Caco-2 (cell line): ENCODE measurements at regions of chr2 and their contacts with region 1.

Region 1: GRCh38 chr2:26235085-26235484 is 9.3 kb downstream of the HADHA start:
- DNase-seq: peak in 1 of 2 experiments; percentile 22
- H3K4me3 ChIP-seq: no peak overlapping the region
- H3K4me3 Mint-ChIP-seq: no peak overlapping the region
- H3K27ac Mint-ChIP-seq: no peak overlapping the region
- H3K4me1 ChIP-seq: peaks cover 6% of the 10 kb centered on the region; the same call in 1 of the 2 replicates
- H3K4me1 Mint-ChIP-seq: peaks cover 8% of the 10 kb centered on the region
- H3K27me3 ChIP-seq: no peaks in the 10 kb centered on the region
- H3K27me3 Mint-ChIP-seq: no peaks in the 10 kb centered on the region
- CTCF ChIP-seq: peak; percentile 30 to 33

Region 2: DNA sequence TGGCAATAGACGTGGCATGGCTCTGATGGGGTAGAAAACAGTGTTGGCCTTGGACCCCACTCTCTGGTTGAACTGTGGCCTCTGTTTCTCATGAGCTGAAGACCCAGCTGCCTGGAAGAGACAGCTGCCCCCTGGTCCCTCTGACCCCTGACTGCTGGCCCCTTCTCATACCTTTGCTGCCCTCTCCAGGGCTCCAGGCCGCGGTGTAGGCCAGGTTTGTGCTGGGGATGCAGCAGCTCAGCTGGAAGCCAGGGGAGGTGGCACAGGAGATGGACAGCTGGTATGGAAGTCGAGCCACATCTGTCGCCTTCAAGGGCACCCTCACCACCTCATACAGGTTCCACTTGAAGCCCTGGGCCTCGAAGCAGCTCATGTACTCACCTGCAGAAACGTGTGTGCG is 79.2 kb after region 1 on chr2:
- CTCF ChIA-PET with region 1: no interaction called
- POLR2A ChIA-PET with region 1: no interaction called
- intact Hi-C with region 1: loop called (anchors 5 kb)
- DNase-seq: peak in 1 of 2 experiments; percentile 56
- H3K4me3 ChIP-seq: no peak overlapping the region
- H3K4me3 Mint-ChIP-seq: no peak overlapping the region
- H3K27ac Mint-ChIP-seq: no peak overlapping the region
- H3K4me1 ChIP-seq: no peaks in the 10 kb centered on the region
- H3K4me1 Mint-ChIP-seq: peaks cover under 1% of the 10 kb centered on the region
- H3K27me3 ChIP-seq: no peaks in the 10 kb centered on the region
- H3K27me3 Mint-ChIP-seq: peaks cover 3% of the 10 kb centered on the region
- CTCF ChIP-seq: peak; percentile 20 to 49

Region 3: GRCh38 chr2:26330113-26330549 is 95.0 kb after region 1 on chr2:
- CTCF ChIA-PET with region 1: interaction called, 4 read pairs
- POLR2A ChIA-PET with region 1: no interaction called
- intact Hi-C with region 1: loop called (anchors 1 kb)
- DNase-seq: peak; percentile 85 to 91
- H3K4me3 ChIP-seq: no peak overlapping the region
- H3K4me3 Mint-ChIP-seq: no peak overlapping the region
- H3K27ac Mint-ChIP-seq: no peak overlapping the region
- H3K4me1 ChIP-seq: no peaks in the 10 kb centered on the region
- H3K4me1 Mint-ChIP-seq: peaks cover 13% of the 10 kb centered on the region
- H3K27me3 ChIP-seq: no peaks in the 10 kb centered on the region
- H3K27me3 Mint-ChIP-seq: no peaks in the 10 kb centered on the region
- CTCF ChIP-seq: peak; percentile 84 to 95

Region 4: GRCh38 chr2:26422947-26423629 is 188.0 kb after region 1 on chr2:
- CTCF ChIA-PET with region 1: no interaction called
- POLR2A ChIA-PET with region 1: no interaction called
- intact Hi-C with region 1: no loop called
- DNase-seq: no peak
- H3K4me3 ChIP-seq: no peak overlapping the region
- H3K4me3 Mint-ChIP-seq: no peak overlapping the region
- H3K27ac Mint-ChIP-seq: no peak overlapping the region
- H3K4me1 ChIP-seq: no peaks in the 10 kb centered on the region
- H3K4me1 Mint-ChIP-seq: no peaks in the 10 kb centered on the region
- H3K27me3 ChIP-seq: no peaks in the 10 kb centered on the region
- H3K27me3 Mint-ChIP-seq: no peaks in the 10 kb centered on the region
- CTCF ChIP-seq: no peak

Region 5: GRCh38 chr2:26469092-26469710 is 234.1 kb after region 1 on chr2:
- CTCF ChIA-PET with region 1: no interaction called
- POLR2A ChIA-PET with region 1: no interaction called
- intact Hi-C with region 1: loop called (anchors 2 kb)
- DNase-seq: peak; percentile 78 to 82
- H3K4me3 ChIP-seq: no peak overlapping the region
- H3K4me3 Mint-ChIP-seq: no peak overlapping the region
- H3K27ac Mint-ChIP-seq: no peak overlapping the region
- H3K4me1 ChIP-seq: peaks cover 6% of the 10 kb centered on the region
- H3K4me1 Mint-ChIP-seq: no peaks in the 10 kb centered on the region
- H3K27me3 ChIP-seq: no peaks in the 10 kb centered on the region
- H3K27me3 Mint-ChIP-seq: no peaks in the 10 kb centered on the region
- CTCF ChIP-seq: peak; percentile 85 to 96